Lower leg skin (tissue), 4 donors: ENCODE measurements at regions of chr6 and their contacts with region 1.

Region 1: DNA sequence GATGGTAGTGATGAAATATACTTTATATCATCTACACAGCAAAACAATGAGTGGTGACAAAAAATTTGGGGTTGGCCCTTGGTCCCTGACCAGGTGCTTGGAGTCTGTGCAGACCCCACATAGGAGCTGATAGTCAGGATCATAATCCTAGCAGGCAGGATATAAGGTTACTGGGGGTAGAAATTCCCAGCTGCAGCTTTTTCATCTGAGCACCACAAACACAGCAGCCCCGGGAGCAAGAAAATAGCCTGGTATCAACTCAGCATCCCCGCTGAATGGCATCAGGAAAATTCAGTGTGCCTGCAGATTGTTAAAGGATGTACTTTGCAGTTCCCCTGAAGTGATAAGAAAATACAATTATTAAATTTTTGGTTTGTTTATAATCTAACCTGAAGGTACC is 27.8 kb upstream of the RPL7L1 start:
- DNase-seq: no peak
- H3K4me3 ChIP-seq: no peak overlapping the region
- CTCF ChIP-seq: no peak
- POLR2A ChIP-seq: no peak

Region 2: GRCh38 chr6:42808492-42809483 is 42.8 kb before region 1 on chr6:
- intact Hi-C with region 1: loop called (anchors 10 kb)
- DNase-seq: peak in 1 of 2 donors; percentile 29
- H3K4me3 ChIP-seq: no peak overlapping the region
- CTCF ChIP-seq: no peak
- POLR2A ChIP-seq: no peak